ENCODE measurements at regions of chr12 and their contacts with region 1.

Region 1: DNA sequence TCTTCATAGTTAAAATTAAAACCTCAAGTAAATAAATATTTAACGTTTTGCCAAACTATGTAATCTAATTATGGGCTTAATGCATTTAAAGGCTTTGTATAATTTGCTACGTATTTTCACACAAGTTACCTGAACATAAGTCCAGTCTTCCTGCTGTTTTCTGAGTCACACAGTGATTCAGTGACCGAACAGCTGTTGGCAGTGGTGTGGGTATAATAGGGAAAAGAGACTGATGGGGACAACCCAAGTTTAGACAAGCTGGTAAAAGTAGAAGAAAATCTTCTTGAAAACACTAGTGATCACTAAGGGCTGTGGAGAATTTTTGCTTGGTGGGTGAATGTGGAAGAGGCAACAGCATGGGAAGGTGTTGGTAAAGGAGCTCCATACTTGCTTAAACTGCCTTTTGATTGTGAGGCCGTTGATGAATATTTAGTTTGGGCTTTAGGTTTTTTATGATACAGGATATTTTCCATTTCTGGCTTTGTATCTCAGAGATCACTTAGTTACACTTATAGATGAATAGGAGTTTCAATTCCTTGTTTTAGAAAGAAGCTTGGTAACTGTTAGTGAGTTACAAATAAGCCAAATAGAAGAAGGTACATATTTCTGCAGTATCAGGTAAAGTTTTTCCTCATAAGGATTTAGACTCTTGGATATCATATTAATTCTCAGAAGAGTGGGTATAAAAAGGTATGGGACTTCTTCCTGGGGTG is 23.9 kb downstream of the LRRK2 start:
- DNase-seq: peak; percentile 4
- H3K4me3 ChIP-seq: no peak overlapping the region
- H3K27ac ChIP-seq: no peak overlapping the region
- H3K4me1 ChIP-seq: no peaks in the 10 kb centered on the region
- H3K27me3 ChIP-seq: no peaks in the 10 kb centered on the region
- CTCF ChIP-seq: no peak

Region 2: GRCh38 chr12:40137252-40137651 is 111.5 kb before region 1 on chr12:
- CTCF ChIA-PET with region 1: no interaction called
- POLR2A ChIA-PET with region 1: no interaction called
- intact Hi-C with region 1: no loop called
- DNase-seq: peak; percentile 21
- H3K4me3 ChIP-seq: no peak overlapping the region
- H3K27ac ChIP-seq: no peak overlapping the region
- H3K4me1 ChIP-seq: no peaks in the 10 kb centered on the region
- H3K27me3 ChIP-seq: no peaks in the 10 kb centered on the region
- CTCF ChIP-seq: no peak

Region 3: GRCh38 chr12:40185303-40185693 is 63.4 kb before region 1 on chr12:
- CTCF ChIA-PET with region 1: no interaction called
- POLR2A ChIA-PET with region 1: no interaction called
- intact Hi-C with region 1: no loop called
- DNase-seq: no peak
- H3K4me3 ChIP-seq: no peak overlapping the region
- H3K27ac ChIP-seq: no peak overlapping the region
- H3K4me1 ChIP-seq: no peaks in the 10 kb centered on the region
- H3K27me3 ChIP-seq: no peaks in the 10 kb centered on the region
- CTCF ChIP-seq: no peak

Region 4: GRCh38 chr12:40286583-40286982 is 37.8 kb after region 1 on chr12:
- CTCF ChIA-PET with region 1: no interaction called
- POLR2A ChIA-PET with region 1: no interaction called
- intact Hi-C with region 1: loop called (anchors 5 kb)
- DNase-seq: no peak
- H3K4me3 ChIP-seq: no peak overlapping the region
- H3K27ac ChIP-seq: no peak overlapping the region
- H3K4me1 ChIP-seq: no peaks in the 10 kb centered on the region
- H3K27me3 ChIP-seq: no peaks in the 10 kb centered on the region
- CTCF ChIP-seq: no peak